GM12878 (cell line): ENCODE measurements at regions of chr3 and their contacts with region 1.

Region 1: DNA sequence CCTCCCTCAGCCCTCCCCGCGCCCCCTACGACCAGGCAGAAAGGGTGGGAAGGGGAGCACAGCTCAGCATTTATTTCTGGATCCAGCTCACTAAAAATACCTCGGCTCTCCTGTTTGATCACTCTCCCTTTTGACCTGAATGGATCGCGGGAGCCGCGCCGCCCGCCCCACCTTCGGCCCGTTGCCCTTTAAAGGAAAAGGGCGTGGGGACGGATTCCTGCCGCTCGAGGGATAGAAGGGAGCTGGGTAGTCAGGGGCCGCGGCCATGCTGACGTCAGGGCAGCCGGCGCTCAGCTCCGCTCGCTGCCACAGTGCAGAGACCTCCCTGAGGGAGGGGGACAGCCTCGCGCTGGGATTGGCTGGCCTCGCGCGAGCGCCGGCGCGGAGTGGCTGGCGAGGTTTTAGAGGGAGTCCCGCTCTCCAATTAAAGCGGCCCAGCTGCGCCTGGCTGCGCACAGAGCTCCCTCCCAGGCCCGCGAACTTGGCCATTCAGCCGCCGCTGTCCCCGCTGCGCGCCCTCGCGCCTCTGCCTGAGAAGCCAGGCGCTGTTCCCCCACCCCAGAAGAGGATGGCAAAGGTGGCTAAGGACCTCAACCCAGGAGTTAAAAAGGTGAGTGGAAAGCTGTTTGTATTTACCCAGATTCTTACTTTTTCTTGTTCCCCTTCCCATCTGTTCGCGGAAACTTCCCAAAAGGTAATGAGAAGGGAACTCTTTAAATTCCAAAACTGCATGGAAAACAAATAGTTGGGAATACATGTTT is at the start of gene LMCD1:
- DNase-seq: peak; percentile 64
- ATAC-seq: peak; percentile 95
- H3K4me3 ChIP-seq: peak within 1 kb of the TSS; percentile 51; the same call in 1 of the 2 replicates
- H3K27ac ChIP-seq: peak within 1 kb of the TSS; percentile 51
- H3K4me1 ChIP-seq: peaks cover 18% of the 10 kb centered on the region
- H3K27me3 ChIP-seq: peaks cover 0 to 2% of the 10 kb centered on the region in 2 experiments; a peak in 1 of 4 replicates
- CTCF ChIP-seq: no peak
- EP300 ChIP-seq: no peak
- POLR2A ChIP-seq: no peak
- RAD21 ChIP-seq: no peak
- polyA plus RNA-seq, gene LMCD1: 0.27 to 0.35 TPM

Region 2: DNA sequence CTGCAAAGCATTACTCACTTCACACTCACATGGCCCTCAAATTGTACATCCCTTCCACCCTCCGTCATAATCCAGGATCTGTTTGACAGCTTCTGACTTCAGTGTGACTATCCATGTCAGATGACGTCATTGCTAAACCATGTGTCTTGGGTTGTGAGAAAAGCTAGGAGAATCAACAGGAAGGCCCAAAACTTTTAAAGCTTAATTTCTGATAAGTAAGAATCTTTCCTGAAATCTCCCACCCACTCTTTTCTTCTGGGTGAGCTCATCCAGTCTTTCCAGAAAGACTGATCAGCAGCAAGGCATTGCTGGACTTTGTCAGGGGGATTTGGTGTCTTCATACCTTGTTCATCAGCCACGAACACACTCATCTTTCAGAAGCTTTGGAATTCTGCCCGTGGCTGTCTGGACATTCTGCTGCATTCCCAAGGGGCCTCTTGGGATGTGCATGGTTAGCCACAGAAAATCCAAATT is 11.4 kb before region 1 on chr3:
- CTCF ChIA-PET with region 1: interaction called, 3 read pairs
- POLR2A ChIA-PET with region 1: no interaction called
- RAD21 ChIA-PET with region 1: interaction called, 4 read pairs
- SMC1A ChIA-PET with region 1: interaction called, 12 read pairs
- in situ Hi-C with region 1: no loop called
- intact Hi-C with region 1: no loop called
- DNase-seq: no peak
- ATAC-seq: no peak
- H3K4me3 ChIP-seq: no peak overlapping the region
- H3K27ac ChIP-seq: no peak overlapping the region
- H3K4me1 ChIP-seq: no peaks in the 10 kb centered on the region
- H3K27me3 ChIP-seq: no peaks in the 10 kb centered on the region
- CTCF ChIP-seq: no peak
- EP300 ChIP-seq: no peak
- POLR2A ChIP-seq: no peak
- RAD21 ChIP-seq: no peak

Region 3: DNA sequence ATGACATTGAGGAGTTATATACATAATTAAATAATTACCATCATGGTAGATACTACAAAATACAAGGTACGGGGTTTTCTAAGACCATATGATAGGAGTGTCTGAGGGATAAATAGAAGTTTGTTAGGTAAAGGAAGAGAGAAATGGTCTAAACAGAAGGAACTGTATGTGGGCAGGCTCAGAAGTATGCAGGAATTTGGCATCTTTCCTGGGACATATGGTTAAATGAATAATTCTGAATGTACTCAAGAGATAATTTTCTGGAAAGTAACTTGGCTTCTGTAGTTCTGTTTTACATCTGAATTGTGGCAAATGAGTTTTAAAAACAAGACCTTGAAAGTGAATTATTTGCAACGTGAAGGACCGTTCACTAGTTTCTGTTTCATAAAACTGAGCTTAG is 17.6 kb after region 1 on chr3:
- CTCF ChIA-PET with region 1: interaction called, 5 read pairs
- POLR2A ChIA-PET with region 1: interaction called, 8 read pairs
- RAD21 ChIA-PET with region 1: interaction called, 4 read pairs
- SMC1A ChIA-PET with region 1: interaction called, 16 read pairs
- in situ Hi-C with region 1: no loop called
- intact Hi-C with region 1: no loop called
- DNase-seq: no peak
- ATAC-seq: no peak
- H3K4me3 ChIP-seq: no peak overlapping the region
- H3K27ac ChIP-seq: no peak overlapping the region
- H3K4me1 ChIP-seq: no peaks in the 10 kb centered on the region; the same call in 1 of the 2 replicates
- H3K27me3 ChIP-seq: no peaks in the 10 kb centered on the region
- CTCF ChIP-seq: no peak
- EP300 ChIP-seq: no peak
- POLR2A ChIP-seq: no peak
- RAD21 ChIP-seq: no peak

Region 4: DNA sequence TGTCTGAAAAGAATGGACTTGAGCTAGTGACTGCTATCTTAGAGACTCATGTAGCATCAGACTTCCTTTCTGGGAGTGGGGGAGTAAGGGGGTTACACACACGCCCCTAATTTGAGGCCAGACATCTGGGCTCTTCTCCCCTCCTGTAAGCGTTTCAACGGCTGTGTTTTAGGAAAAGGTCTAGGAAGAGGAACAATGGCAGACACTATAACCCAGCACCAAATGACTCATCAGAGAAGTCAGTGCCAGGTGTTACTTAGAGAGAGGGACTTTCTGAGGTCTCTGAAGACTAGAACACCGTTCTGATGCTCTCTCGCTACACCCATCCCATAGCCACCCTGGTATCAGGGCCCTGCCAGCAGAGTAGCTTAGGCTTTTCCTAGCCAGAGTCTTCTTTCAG is 77.5 kb after region 1 on chr3:
- CTCF ChIA-PET with region 1: interaction called, 5 read pairs
- POLR2A ChIA-PET with region 1: interaction called, 7 read pairs
- RAD21 ChIA-PET with region 1: interaction called, 4 read pairs
- SMC1A ChIA-PET with region 1: interaction called, 17 read pairs
- in situ Hi-C with region 1: no loop called
- intact Hi-C with region 1: loop called (anchors 2 kb)
- DNase-seq: peak; percentile 51
- ATAC-seq: peak; percentile 98
- H3K4me3 ChIP-seq: no peak overlapping the region
- H3K27ac ChIP-seq: no peak overlapping the region
- H3K4me1 ChIP-seq: peaks cover 16% of the 10 kb centered on the region
- H3K27me3 ChIP-seq: no peaks in the 10 kb centered on the region
- CTCF ChIP-seq: no peak
- EP300 ChIP-seq: peak in 1 of 2 experiments; percentile 39; a peak in 1 of 4 replicates
- POLR2A ChIP-seq: no peak
- RAD21 ChIP-seq: no peak

Region 5: DNA sequence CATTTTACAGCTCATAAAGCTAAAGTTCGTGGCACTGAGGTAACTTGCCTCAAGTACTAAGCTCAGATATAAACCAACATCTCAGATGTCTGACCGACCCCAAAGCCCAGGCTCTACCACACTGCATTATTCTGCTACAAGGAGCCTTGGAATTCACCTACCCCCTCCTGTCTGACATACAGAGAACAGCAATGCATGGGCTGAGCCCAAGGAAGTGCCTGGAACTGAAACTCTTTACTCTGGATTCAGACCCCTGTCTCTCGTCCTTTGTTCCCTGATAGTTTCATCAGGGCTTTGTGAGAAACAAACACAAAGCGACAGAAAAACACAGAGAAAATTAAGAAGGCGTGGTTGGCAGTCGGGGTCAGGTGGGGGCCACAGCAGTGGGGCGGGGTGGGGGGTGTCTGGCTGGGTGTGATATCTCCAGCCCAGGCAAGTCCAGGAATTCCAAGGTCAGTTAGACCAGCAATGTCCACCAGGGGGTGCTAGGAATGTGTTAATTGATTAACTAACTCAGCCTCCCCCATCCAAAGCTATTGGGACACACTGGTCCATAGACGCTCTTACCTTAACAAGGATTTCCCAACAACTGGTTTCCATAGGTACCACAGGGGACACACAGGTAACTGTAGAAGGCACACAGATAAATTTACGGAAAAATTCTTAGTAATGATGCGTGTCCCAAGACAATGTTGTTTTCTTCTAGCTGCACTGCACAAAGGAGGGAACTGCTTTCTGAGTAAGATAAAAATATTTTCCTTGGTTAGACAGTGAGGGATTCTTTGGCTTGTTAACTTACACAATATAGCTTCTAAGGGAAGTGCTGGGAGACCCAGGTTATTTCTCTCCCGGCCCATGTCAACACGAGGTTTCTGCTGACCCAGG is 161.9 kb after region 1 on chr3:
- CTCF ChIA-PET with region 1: interaction called, 5 read pairs
- POLR2A ChIA-PET with region 1: no interaction called
- RAD21 ChIA-PET with region 1: interaction called, 3 read pairs
- SMC1A ChIA-PET with region 1: no interaction called
- in situ Hi-C with region 1: no loop called
- intact Hi-C with region 1: loop called (anchors 5 kb)
- DNase-seq: peak; percentile 36
- ATAC-seq: peak; percentile 56
- H3K4me3 ChIP-seq: no peak overlapping the region
- H3K27ac ChIP-seq: no peak overlapping the region
- H3K4me1 ChIP-seq: peaks cover 24% of the 10 kb centered on the region
- H3K27me3 ChIP-seq: no peaks in the 10 kb centered on the region
- CTCF ChIP-seq: peak; percentile 54 to 68 (median 58)
- EP300 ChIP-seq: no peak
- POLR2A ChIP-seq: no peak
- RAD21 ChIP-seq: peak; percentile 64